ENCODE measurements at regions of chr14 and their contacts with region 1.

Region 1: GRCh38 chr14:76918751-76919543 is 92.7 kb downstream of the LRRC74A start:
- DNase-seq: no peak
- ATAC-seq: no peak
- H3K4me3 ChIP-seq: no peak overlapping the region
- H3K4me3 Mint-ChIP-seq: no peak overlapping the region
- H3K27ac ChIP-seq: no peak overlapping the region
- H3K27ac Mint-ChIP-seq: no peak overlapping the region
- H3K4me1 ChIP-seq: peaks cover 17% of the 10 kb centered on the region
- H3K4me1 Mint-ChIP-seq: peaks cover 29% of the 10 kb centered on the region
- H3K27me3 ChIP-seq: no peaks in the 10 kb centered on the region
- H3K27me3 Mint-ChIP-seq: no peaks in the 10 kb centered on the region
- CTCF ChIP-seq: no peak

Region 2: DNA sequence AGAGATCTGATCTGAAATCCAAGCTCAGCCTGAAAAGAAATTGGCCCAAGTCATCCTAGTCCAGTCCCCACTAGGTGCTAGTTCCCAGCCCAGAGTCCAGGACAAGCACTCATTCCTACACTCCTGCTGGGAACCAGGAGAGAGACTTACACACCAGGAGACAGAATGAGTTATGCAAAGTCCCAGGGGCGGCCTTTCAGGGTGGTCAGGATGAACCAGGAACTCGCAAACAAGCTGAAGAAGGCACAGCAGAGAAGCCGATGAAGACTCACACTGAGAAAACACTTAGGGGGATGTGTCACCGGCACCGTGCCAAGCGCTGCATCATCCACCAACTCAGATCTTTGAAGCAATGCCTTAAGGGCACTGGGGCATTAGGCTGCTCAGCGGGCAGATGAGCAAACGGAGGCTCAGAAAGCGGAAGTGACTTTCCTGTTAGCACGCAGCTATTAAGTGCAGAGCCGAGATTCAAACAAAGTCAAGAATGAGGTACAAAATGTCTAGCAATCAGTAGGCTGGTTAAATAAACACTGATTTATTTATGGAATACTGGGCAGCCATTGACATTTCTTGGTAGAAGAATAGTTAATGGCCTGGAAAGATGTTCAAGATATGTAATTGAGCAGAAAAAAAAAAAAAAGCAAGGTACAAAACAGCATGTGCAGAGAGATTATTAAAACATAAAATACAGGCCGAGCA is 14.1 kb before region 1 on chr14:
- CTCF ChIA-PET with region 1: interaction called, 24 read pairs
- POLR2A ChIA-PET with region 1: interaction called, 3 read pairs
- intact Hi-C with region 1: no loop called
- DNase-seq: peak; percentile 38 to 85 (median 77)
- ATAC-seq: peak; percentile 84
- H3K4me3 ChIP-seq: peak overlapping the region in 1 of 2 experiments; percentile 3
- H3K4me3 Mint-ChIP-seq: peak overlapping the region; percentile 61
- H3K27ac ChIP-seq: no peak overlapping the region
- H3K27ac Mint-ChIP-seq: peak overlapping the region; percentile 68
- H3K4me1 ChIP-seq: peaks cover 28% of the 10 kb centered on the region
- H3K4me1 Mint-ChIP-seq: peaks cover 23% of the 10 kb centered on the region
- H3K27me3 ChIP-seq: no peaks in the 10 kb centered on the region
- H3K27me3 Mint-ChIP-seq: no peaks in the 10 kb centered on the region
- CTCF ChIP-seq: no peak

Region 3: GRCh38 chr14:76941946-76942805 is 23.2 kb after region 1 on chr14:
- CTCF ChIA-PET with region 1: interaction called, 18 read pairs
- POLR2A ChIA-PET with region 1: no interaction called
- intact Hi-C with region 1: no loop called
- DNase-seq: no peak
- ATAC-seq: no peak
- H3K4me3 ChIP-seq: no peak overlapping the region
- H3K4me3 Mint-ChIP-seq: no peak overlapping the region
- H3K27ac ChIP-seq: no peak overlapping the region
- H3K27ac Mint-ChIP-seq: no peak overlapping the region
- H3K4me1 ChIP-seq: peaks cover 6% of the 10 kb centered on the region
- H3K4me1 Mint-ChIP-seq: peaks cover 11% of the 10 kb centered on the region
- H3K27me3 ChIP-seq: no peaks in the 10 kb centered on the region
- H3K27me3 Mint-ChIP-seq: no peaks in the 10 kb centered on the region
- CTCF ChIP-seq: no peak

Region 4: GRCh38 chr14:76984297-76984696 is 65.3 kb after region 1 on chr14:
- CTCF ChIA-PET with region 1: interaction called, 11 read pairs
- POLR2A ChIA-PET with region 1: no interaction called
- intact Hi-C with region 1: no loop called
- DNase-seq: no peak
- ATAC-seq: no peak
- H3K4me3 ChIP-seq: no peak overlapping the region
- H3K4me3 Mint-ChIP-seq: no peak overlapping the region
- H3K27ac ChIP-seq: no peak overlapping the region
- H3K27ac Mint-ChIP-seq: peak overlapping the region; percentile 25
- H3K4me1 ChIP-seq: no peaks in the 10 kb centered on the region
- H3K4me1 Mint-ChIP-seq: peaks cover 6% of the 10 kb centered on the region
- H3K27me3 ChIP-seq: no peaks in the 10 kb centered on the region
- H3K27me3 Mint-ChIP-seq: no peaks in the 10 kb centered on the region
- CTCF ChIP-seq: no peak

Region 5: GRCh38 chr14:77023001-77023996 is 104.4 kb after region 1 on chr14:
- CTCF ChIA-PET with region 1: interaction called, 26 read pairs
- POLR2A ChIA-PET with region 1: no interaction called
- intact Hi-C with region 1: no loop called
- DNase-seq: no peak
- ATAC-seq: no peak
- H3K4me3 ChIP-seq: no peak overlapping the region
- H3K4me3 Mint-ChIP-seq: no peak overlapping the region
- H3K27ac ChIP-seq: peak overlapping the region in 1 of 2 experiments; percentile 10
- H3K27ac Mint-ChIP-seq: peak overlapping the region; percentile 14
- H3K4me1 ChIP-seq: peaks cover 38% of the 10 kb centered on the region
- H3K4me1 Mint-ChIP-seq: peaks cover 38% of the 10 kb centered on the region
- H3K27me3 ChIP-seq: no peaks in the 10 kb centered on the region
- H3K27me3 Mint-ChIP-seq: no peaks in the 10 kb centered on the region
- CTCF ChIP-seq: no peak

Region 6: GRCh38 chr14:77040059-77040740 is 121.3 kb after region 1 on chr14:
- CTCF ChIA-PET with region 1: interaction called, 37 read pairs
- POLR2A ChIA-PET with region 1: no interaction called
- intact Hi-C with region 1: no loop called
- DNase-seq: peak; percentile 94 to 100 (median 99)
- ATAC-seq: peak; percentile 77
- H3K4me3 ChIP-seq: peak overlapping the region; percentile 42 to 47
- H3K4me3 Mint-ChIP-seq: peak overlapping the region; percentile 86
- H3K27ac ChIP-seq: peak overlapping the region; percentile 90 to 94
- H3K27ac Mint-ChIP-seq: peak overlapping the region; percentile 99
- H3K4me1 ChIP-seq: peaks cover 74% of the 10 kb centered on the region
- H3K4me1 Mint-ChIP-seq: peaks cover 90% of the 10 kb centered on the region
- H3K27me3 ChIP-seq: no peaks in the 10 kb centered on the region
- H3K27me3 Mint-ChIP-seq: no peaks in the 10 kb centered on the region
- CTCF ChIP-seq: no peak

Region 7: DNA sequence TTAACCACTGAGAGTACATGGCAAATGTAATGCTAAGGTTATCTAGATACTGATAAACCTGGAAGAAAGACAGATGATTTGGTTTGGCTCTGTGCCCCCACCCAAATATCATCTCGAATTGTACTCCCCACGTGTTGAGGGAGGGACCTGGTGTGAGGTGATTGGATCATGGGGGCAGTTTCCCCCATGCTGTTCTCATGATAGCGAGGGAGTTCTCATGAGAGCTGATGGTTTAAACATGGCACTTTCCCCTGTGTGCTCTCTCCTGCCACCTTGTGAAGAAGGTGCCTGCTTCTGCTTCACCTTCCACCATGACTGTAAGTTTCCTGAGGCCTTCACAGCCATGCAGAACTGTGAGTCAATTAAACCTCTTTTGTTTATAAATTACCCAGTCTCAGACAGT is 490.2 kb after region 1 on chr14:
- CTCF ChIA-PET with region 1: no interaction called
- POLR2A ChIA-PET with region 1: no interaction called
- intact Hi-C with region 1: no loop called
- DNase-seq: peak in 2 of 9 experiments; percentile 5 to 11
- ATAC-seq: no peak
- H3K4me3 ChIP-seq: no peak overlapping the region
- H3K4me3 Mint-ChIP-seq: no peak overlapping the region
- H3K27ac ChIP-seq: no peak overlapping the region
- H3K27ac Mint-ChIP-seq: no peak overlapping the region
- H3K4me1 ChIP-seq: peaks cover 4% of the 10 kb centered on the region
- H3K4me1 Mint-ChIP-seq: peaks cover 13% of the 10 kb centered on the region
- H3K27me3 ChIP-seq: no peaks in the 10 kb centered on the region
- H3K27me3 Mint-ChIP-seq: no peaks in the 10 kb centered on the region
- CTCF ChIP-seq: no peak